ENCODE measurements at regions of chr18 and their contacts with region 1.

Region 1: DNA sequence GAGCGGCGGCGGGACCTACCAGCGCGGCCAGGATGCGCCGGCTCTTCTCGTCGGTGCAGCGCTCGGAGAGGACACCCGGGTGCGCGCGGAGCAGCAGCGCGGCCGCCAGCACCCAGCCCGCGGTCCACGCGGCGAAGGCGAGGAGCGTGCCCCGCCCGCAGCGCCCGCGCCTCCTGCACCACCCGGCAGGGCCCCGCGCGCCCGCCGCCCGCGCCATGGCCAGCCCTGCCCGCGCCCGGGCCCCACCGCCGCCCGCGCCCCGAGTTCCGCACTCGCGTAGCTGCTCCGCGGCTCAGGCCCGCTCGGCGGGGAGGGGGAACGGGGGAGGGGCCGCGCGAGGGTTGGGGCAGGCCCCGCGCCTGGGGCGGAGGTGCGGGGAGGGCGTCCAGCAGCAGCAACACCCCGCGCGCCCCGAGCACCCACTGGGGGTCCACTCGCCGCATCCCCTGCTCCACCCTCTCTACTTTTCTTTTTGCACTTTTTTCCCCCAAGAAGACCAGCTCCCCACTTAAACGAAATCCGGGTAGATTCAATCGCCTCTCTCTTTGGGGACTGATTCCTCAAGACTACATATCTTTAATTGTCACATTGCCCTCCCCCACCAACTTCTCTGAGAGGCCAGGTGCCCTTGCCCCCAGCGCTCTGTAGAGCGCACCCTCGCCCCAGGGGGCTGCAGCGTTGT is at the start of gene DIPK1C:
- DNase-seq: peak; percentile 51 to 95 (median 66)

Region 2: GRCh38 chr18:74551936-74552555 is 94.9 kb after region 1 on chr18:
- intact Hi-C with region 1: loop called (anchors 2 kb)
- DNase-seq: peak; percentile 47 to 97 (median 86)